Activated CD4-positive, alpha-beta T cell treated with anti-CD3 and anti-CD28 coated beads for 36 hours (primary cell): ENCODE measurements at regions of chr17 and their contacts with region 1.

Region 1: GRCh38 chr17:27544350-27545131 is 86.4 kb upstream of the LGALS9 start:
- DNase-seq: peak; percentile 89
- ATAC-seq: peak; percentile 83
- H3K4me3 Mint-ChIP-seq: peak overlapping the region; percentile 62
- H3K27ac Mint-ChIP-seq: peak overlapping the region; percentile 93
- H3K4me1 Mint-ChIP-seq: peaks cover 80% of the 10 kb centered on the region
- H3K27me3 Mint-ChIP-seq: no peaks in the 10 kb centered on the region

Region 2: DNA sequence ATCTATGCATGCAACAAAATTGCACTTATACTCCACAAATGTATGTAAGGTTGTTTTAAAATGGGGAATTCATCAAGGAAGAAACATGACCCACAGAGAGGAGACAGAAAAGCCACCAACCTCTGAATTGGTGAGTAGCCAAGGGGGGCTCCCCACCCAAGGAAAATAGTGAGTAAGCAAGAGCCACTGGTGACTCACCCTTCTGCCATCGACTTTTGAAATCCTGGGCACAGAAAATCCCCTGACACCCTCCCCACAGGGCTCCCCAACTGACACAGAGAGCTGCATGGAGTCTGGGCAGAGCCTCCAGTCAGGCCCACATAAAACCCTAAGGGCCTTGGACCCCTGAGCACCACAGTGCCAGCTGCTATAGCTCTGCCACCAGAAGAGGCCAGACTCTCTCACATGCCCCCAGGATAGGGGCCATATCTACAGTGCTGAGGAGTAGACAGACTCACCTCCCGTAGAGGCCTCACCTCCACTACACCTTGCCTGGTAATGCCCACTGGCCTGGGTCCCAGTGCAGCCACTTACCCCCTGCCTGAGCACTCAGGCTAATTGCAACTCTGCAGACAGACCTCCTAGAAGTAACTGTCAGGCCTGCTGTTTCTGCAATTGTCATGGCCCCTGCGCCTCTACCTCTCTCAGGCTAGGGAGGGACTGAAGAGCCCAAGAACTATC is 495.3 kb before region 1 on chr17:
- CTCF ChIA-PET with region 1: no interaction called
- POLR2A ChIA-PET with region 1: no interaction called
- intact Hi-C with region 1: loop called in 1 of 2 experiments (anchors 10 kb)
- DNase-seq: peak; percentile 42
- ATAC-seq: peak; percentile 70
- H3K4me3 Mint-ChIP-seq: no peak overlapping the region
- H3K27ac Mint-ChIP-seq: no peak overlapping the region
- H3K4me1 Mint-ChIP-seq: no peaks in the 10 kb centered on the region
- H3K27me3 Mint-ChIP-seq: peaks cover 3% of the 10 kb centered on the region

Region 3: GRCh38 chr17:27332485-27333409 is 211.8 kb before region 1 on chr17:
- CTCF ChIA-PET with region 1: no interaction called
- POLR2A ChIA-PET with region 1: interaction called, 6 read pairs
- intact Hi-C with region 1: loop called in 1 of 2 experiments (anchors 1 kb)
- DNase-seq: peak; percentile 96
- ATAC-seq: peak; percentile 90
- H3K4me3 Mint-ChIP-seq: peak overlapping the region; percentile 79
- H3K27ac Mint-ChIP-seq: peak overlapping the region; percentile 93
- H3K4me1 Mint-ChIP-seq: peaks cover 18% of the 10 kb centered on the region
- H3K27me3 Mint-ChIP-seq: no peaks in the 10 kb centered on the region

Region 4: DNA sequence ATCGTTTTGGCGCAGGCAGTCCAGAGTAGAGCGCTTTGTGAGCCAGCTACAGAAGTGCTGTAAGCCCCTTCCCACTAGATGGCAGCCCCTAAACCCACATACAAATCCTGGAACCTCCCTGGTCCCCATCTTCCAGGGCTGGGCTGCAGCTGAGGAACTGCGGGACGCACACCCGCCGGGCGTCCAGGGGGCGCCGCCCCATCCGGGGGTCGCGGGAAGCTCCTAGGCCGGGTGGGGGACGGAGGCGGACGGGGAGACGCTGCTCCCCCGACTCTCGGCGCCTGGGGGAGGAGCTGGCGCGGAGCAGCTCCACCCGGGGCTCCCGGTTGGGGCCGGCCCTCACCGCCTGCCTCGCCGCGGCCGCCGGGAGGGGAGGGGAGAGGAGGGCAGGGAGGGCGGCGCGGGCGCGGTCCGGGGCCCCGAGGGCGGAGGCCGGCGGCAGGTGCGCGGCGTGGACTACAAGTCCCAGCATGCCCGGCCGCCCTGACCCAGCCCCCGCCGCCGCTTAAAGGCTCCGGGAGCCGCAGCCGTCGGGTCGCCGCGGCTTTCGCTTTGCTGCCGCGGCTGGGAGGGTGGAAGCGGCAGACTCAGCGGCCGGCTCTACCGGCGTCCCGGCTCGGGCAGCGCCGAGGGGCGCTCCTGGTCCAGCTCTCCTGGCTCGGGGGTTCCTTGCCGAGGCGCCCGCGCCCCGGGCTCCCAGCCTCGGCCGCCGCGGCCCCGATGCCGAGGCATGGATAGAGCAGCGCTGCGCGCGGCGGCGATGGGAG is 88.4 kb before region 1 on chr17 and contains the start of gene KSR1:
- CTCF ChIA-PET with region 1: interaction called, 5 read pairs
- POLR2A ChIA-PET with region 1: no interaction called
- intact Hi-C with region 1: loop called in 1 of 2 experiments (anchors 1 kb)
- DNase-seq: peak; percentile 92
- ATAC-seq: peak; percentile 93
- H3K4me3 Mint-ChIP-seq: peak within 1 kb of the TSS; percentile 88
- H3K27ac Mint-ChIP-seq: peak within 1 kb of the TSS; percentile 83
- H3K4me1 Mint-ChIP-seq: peaks cover 43% of the 10 kb centered on the region
- H3K27me3 Mint-ChIP-seq: peaks cover 6% of the 10 kb centered on the region
- total RNA-seq, gene KSR1: 96.6 to 113 TPM

Region 5: DNA sequence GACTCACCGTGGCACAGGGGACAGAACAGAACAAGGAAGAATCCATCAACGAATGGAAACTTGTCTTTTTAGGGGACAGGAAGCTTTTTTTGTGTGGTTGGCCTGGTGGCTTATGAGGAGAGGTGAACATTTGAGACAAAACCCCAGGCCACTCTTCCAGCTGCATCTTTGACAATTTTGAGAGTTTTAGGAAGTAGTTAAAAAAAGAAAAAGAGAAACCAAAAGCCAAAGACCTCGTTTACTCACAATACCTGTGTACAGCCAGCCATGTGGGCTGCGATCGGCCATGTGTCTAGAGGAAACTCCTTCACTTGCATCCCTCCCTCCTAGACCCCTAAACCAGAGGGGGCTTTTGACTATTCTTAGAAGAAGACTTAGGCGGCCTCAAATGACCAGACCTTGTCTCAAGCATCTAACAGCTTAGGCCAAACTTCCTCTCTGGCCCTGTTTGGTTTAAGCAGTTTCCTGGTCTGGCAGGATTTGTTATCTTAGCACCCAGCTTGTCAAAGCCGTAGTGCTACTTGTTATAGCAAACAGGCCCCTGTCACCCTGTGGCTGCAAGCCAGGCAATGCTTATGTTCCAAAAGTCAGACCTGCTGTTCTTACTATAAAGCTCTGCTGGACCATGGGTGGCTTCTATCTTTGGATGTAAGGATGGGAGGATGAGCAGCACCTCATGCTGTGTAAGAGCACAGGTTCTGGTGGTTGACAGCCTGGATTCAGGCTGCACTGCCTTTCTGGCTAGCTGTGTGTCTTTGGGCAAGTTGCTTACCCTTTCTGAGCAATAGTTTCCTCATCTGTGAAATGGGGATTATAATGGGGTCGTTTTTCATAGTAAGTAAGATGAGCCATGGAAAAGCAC is 70.6 kb before region 1 on chr17:
- CTCF ChIA-PET with region 1: interaction called, 6 read pairs
- POLR2A ChIA-PET with region 1: interaction called, 23 read pairs
- intact Hi-C with region 1: loop called (anchors 1 kb)
- DNase-seq: peak; percentile 93
- ATAC-seq: peak; percentile 25
- H3K4me3 Mint-ChIP-seq: peak overlapping the region; percentile 50
- H3K27ac Mint-ChIP-seq: peak overlapping the region; percentile 98
- H3K4me1 Mint-ChIP-seq: peaks cover 94% of the 10 kb centered on the region
- H3K27me3 Mint-ChIP-seq: no peaks in the 10 kb centered on the region

Region 6: DNA sequence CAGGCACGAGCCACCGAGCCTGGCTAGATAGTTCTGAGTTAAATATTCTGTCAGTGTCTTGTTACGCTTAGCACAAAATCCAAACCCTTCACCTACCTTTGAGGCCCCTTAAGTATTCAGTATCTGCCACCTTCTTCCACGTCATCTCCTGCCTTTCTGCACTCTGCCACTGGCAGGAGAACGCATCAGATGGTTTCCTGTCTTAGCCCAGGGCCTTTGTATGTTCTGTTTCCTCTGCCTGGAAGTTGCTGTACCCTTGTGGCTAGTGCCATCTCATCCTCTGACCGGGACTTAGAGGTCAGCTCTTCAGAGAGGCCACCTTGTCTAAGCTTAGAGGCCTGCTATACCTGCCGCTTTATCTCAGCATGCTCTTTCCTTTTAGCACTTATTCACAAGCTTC is 19.0 kb after region 1 on chr17:
- CTCF ChIA-PET with region 1: interaction called, 16 read pairs
- POLR2A ChIA-PET with region 1: interaction called, 3 read pairs
- intact Hi-C with region 1: loop called in 1 of 2 experiments (anchors 2 kb)
- DNase-seq: no peak
- ATAC-seq: peak; percentile 27
- H3K4me3 Mint-ChIP-seq: no peak overlapping the region
- H3K27ac Mint-ChIP-seq: peak overlapping the region; percentile 35
- H3K4me1 Mint-ChIP-seq: peaks cover 41% of the 10 kb centered on the region
- H3K27me3 Mint-ChIP-seq: no peaks in the 10 kb centered on the region

Region 7: GRCh38 chr17:27578718-27579085 is 34.2 kb after region 1 on chr17:
- CTCF ChIA-PET with region 1: interaction called, 7 read pairs
- POLR2A ChIA-PET with region 1: interaction called, 7 read pairs
- intact Hi-C with region 1: loop called (anchors 1 kb)
- DNase-seq: peak; percentile 87
- ATAC-seq: peak; percentile 78
- H3K4me3 Mint-ChIP-seq: peak overlapping the region; percentile 27
- H3K27ac Mint-ChIP-seq: peak overlapping the region; percentile 91
- H3K4me1 Mint-ChIP-seq: peaks cover 73% of the 10 kb centered on the region
- H3K27me3 Mint-ChIP-seq: no peaks in the 10 kb centered on the region

Region 8: DNA sequence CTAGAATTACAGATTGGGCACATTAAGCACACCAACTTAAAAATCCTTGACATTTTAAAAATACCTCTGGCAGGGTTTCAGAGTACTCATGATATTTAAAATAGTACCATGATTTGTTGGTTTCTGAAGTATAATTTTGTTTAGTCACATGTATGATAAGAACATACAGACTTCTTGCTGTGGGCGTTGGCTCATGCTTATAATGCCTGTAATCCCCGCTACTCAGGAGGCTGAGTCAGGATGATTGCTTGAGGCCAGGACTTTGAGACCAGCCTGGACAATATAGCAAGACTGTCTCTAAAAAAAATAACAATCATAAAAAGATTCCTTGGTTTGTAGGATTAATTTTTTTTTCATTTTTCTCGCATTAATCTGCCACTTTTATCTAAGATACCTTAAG is 177.3 kb after region 1 on chr17:
- CTCF ChIA-PET with region 1: no interaction called
- POLR2A ChIA-PET with region 1: no interaction called
- intact Hi-C with region 1: no loop called
- DNase-seq: no peak
- ATAC-seq: no peak
- H3K4me3 Mint-ChIP-seq: no peak overlapping the region
- H3K27ac Mint-ChIP-seq: no peak overlapping the region
- H3K4me1 Mint-ChIP-seq: no peaks in the 10 kb centered on the region
- H3K27me3 Mint-ChIP-seq: peaks cover 12% of the 10 kb centered on the region